Gastrocnemius medialis (tissue), 4 donors: ENCODE measurements at regions of chr10 and their contacts with region 1.

Region 1: GRCh38 chr10:110664483-110665420 is 20.6 kb downstream of the RBM20 start:
- DNase-seq: peak; percentile 51 to 67
- ATAC-seq: peak; percentile 61 to 66
- H3K4me3 ChIP-seq: no peak overlapping the region
- H3K27ac ChIP-seq: peak overlapping the region; percentile 89 to 97 (median 94)
- H3K4me1 ChIP-seq: peaks cover 30 to 42% of the 10 kb centered on the region in 2 donors
- H3K27me3 ChIP-seq: no peaks in the 10 kb centered on the region
- CTCF ChIP-seq: no peak
- POLR2A ChIP-seq: no peak

Region 2: DNA sequence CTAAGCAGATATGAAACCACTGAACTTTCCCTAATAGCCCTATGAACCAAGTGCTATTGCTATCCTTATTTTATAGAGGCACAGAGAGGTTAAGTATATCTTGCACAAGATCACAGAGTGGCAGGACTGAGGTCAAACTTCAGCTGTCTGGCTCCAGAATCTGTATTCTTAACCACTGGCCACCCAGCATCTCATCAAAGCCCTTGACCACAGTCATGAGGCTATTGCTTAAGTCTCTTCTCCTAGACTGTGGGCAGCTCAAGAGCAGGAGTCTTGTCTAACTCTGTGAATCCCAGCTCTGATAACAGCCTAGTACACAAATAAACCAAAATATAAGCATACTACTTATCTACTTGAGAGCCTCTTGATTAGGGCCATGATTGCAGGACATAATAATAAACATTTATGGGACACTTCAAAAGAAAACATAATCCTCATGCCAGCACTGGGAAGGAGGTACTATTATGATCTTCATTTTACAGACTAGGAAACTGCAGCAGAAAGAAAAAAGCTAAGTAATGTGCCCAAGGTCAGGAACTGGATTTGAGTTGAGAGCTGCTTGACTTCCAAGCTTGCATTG is 119.7 kb before region 1 on chr10:
- in situ Hi-C with region 1: no loop called
- intact Hi-C with region 1: no loop called
- DNase-seq: no peak
- ATAC-seq: no peak
- H3K4me3 ChIP-seq: no peak overlapping the region
- H3K27ac ChIP-seq: no peak overlapping the region
- H3K4me1 ChIP-seq: no peaks in the 10 kb centered on the region
- H3K27me3 ChIP-seq: peaks cover 0 to 6% (median 0%) of the 10 kb centered on the region in 3 donors
- CTCF ChIP-seq: no peak
- POLR2A ChIP-seq: no peak

Region 3: GRCh38 chr10:110636932-110637557 is 27.7 kb before region 1 on chr10:
- in situ Hi-C with region 1: no loop called
- intact Hi-C with region 1: loop called (anchors 1 kb)
- DNase-seq: peak; percentile 54 to 93
- ATAC-seq: peak; percentile 55 to 77
- H3K4me3 ChIP-seq: no peak overlapping the region
- H3K27ac ChIP-seq: peak overlapping the region; percentile 83 to 91 (median 85)
- H3K4me1 ChIP-seq: peaks cover 36 to 55% of the 10 kb centered on the region in 2 donors
- H3K27me3 ChIP-seq: no peaks in the 10 kb centered on the region
- CTCF ChIP-seq: no peak
- POLR2A ChIP-seq: peak in 1 of 2 donors; percentile 7

Region 4: GRCh38 chr10:110648692-110649346 is 15.9 kb before region 1 on chr10:
- in situ Hi-C with region 1: no loop called
- intact Hi-C with region 1: loop called (anchors 2 kb)
- DNase-seq: no peak
- ATAC-seq: no peak
- H3K4me3 ChIP-seq: no peak overlapping the region
- H3K27ac ChIP-seq: no peak overlapping the region
- H3K4me1 ChIP-seq: peaks cover 8 to 15% of the 10 kb centered on the region in 2 donors
- H3K27me3 ChIP-seq: peaks cover 0 to 4% (median 0%) of the 10 kb centered on the region in 3 donors
- CTCF ChIP-seq: peak in 1 of 5 experiments; percentile 20
- POLR2A ChIP-seq: no peak